CD4-positive, alpha-beta memory T cell (primary cell): ENCODE measurements at regions of chr6 and their contacts with region 1.

Region 1: DNA sequence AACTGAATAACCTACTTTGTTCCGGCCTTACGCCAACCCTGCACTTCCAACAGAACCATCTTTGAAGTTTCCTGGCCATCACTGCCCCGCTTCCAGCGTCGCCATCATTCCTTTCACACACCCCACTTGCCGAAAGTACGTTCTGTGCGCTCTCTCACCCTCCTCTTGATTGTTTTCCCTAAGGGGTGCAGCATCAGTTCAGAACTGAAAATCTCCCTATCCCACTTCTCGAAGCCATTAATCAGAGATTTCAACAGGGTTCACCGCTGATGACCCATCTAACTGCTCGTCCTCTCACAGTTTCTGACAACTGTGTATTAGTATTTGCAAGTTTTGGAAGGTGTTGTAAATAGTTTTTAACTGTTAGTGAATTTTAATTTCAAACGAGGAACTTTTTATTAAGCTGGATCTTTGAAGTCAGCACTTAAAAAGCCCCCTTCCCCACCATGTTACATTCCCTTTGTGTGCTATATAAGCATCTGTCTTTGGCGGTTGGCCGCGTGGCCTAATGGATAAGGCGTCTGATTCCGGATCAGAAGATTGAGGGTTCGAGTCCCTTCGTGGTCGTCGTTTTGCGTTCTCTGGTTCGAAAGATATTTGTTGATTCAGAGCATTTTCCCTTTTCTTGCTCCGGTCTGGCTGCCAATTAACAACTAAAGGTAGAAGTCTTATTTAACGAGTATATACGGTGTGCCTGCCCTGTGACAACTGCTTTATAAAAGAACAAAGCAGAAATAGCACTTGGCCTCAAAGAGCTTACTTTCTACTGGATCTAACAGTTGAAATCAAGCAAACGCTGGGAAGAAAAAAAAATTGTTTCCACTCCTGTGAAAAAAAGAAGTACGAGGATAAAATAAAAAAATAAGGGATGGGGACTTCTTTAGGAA is 42.6 kb downstream of the TRIM27 start:
- DNase-seq: peak in 4 of 5 donors; percentile 21 to 46 (median 37)
- H3K4me3 ChIP-seq: no peak overlapping the region
- H3K4me3 Mint-ChIP-seq: peak overlapping the region; percentile 62 to 83 (median 76)
- H3K27ac ChIP-seq: no peak overlapping the region
- H3K27ac Mint-ChIP-seq: peak overlapping the region in 6 of 7 donors; percentile 18 to 94 (median 78)
- H3K4me1 ChIP-seq: peaks cover 24% of the 10 kb centered on the region
- H3K4me1 Mint-ChIP-seq: peaks cover 30 to 39% (median 35%) of the 10 kb centered on the region in 4 donors
- H3K27me3 ChIP-seq: no peaks in the 10 kb centered on the region
- H3K27me3 Mint-ChIP-seq: peaks cover 12 to 23% of the 10 kb centered on the region in 2 donors

Region 2: DNA sequence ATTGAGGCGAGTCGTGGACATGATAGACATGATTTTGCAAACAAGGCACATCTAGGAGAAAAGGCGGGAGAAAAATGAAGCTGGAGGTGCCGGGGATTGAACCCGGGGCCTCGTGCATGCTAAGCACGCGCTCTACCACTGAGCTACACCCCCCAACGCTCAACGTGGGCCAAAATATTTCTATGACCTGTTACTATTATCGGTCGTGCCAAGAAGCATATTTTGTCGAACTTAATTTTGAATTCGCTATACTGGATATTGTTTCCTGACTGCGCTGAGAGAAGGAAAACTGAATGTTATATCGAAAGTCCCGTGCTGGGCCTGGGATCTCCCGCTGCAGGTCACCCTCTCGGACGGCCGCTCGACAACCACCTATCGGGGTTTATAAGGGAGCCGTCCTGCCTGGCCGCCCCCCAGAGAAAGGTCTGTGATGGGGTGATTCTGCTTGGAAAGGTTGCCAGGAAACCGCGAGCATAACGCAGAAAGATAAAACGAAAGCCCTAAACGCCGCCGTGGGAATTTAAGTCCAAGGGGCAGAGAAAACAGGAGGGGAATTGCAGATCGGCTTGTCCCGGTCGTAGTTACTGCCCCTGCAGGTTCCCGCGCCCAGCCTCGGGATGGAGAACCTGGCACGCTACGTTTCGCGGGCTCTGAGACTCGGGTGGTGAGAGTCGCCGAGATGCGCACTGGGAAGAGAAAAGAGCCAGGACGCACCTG is 17.4 kb before region 1 on chr6:
- CTCF ChIA-PET with region 1: interaction called, 31 read pairs
- POLR2A ChIA-PET with region 1: interaction called, 208 read pairs
- intact Hi-C with region 1: loop called (anchors 1 kb)
- DNase-seq: peak; percentile 88 to 91 (median 89)
- H3K4me3 ChIP-seq: peak overlapping the region; percentile 53 to 85
- H3K4me3 Mint-ChIP-seq: peak overlapping the region; percentile 92 to 97 (median 94)
- H3K27ac ChIP-seq: peak overlapping the region; percentile 45
- H3K27ac Mint-ChIP-seq: peak overlapping the region; percentile 79 to 99 (median 97)
- H3K4me1 ChIP-seq: peaks cover 14% of the 10 kb centered on the region
- H3K4me1 Mint-ChIP-seq: peaks cover 21 to 64% (median 43%) of the 10 kb centered on the region in 4 donors
- H3K27me3 ChIP-seq: no peaks in the 10 kb centered on the region
- H3K27me3 Mint-ChIP-seq: peaks cover 4 to 5% of the 10 kb centered on the region in 2 donors

Region 3: DNA sequence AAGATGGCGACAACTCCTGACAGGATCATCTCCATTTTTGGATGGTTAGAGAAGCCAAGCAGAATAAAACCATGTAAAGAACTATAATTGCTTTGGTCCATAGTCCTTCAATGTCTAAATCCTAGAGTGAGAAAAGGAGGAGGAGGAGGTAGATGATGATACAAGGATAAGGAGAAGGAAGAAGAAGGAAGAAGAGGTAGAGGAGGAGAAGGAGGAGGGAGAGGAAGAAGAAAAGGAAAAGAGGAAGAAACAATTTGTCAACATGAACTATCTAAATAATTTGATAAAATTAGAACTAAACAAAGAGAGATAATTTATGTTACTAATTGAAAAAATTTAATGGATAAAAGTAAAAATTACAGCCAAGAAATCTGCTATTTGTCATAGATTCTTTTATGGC is 163.9 kb after region 1 on chr6 and contains the start of gene OR2W1:
- CTCF ChIA-PET with region 1: no interaction called
- POLR2A ChIA-PET with region 1: no interaction called
- intact Hi-C with region 1: no loop called
- DNase-seq: no peak
- H3K4me3 ChIP-seq: no peak within 1 kb of the TSS
- H3K4me3 Mint-ChIP-seq: no peak within 1 kb of the TSS
- H3K27ac ChIP-seq: no peak within 1 kb of the TSS
- H3K27ac Mint-ChIP-seq: no peak within 1 kb of the TSS
- H3K4me1 ChIP-seq: no peaks in the 10 kb centered on the region
- H3K4me1 Mint-ChIP-seq: no peaks in the 10 kb centered on the region
- H3K27me3 ChIP-seq: peaks cover 27% of the 10 kb centered on the region
- H3K27me3 Mint-ChIP-seq: peaks cover 30 to 40% of the 10 kb centered on the region in 2 donors
- total RNA-seq, gene OR2W1: not detected